ENCODE measurements at regions of chr11 and their contacts with region 1.

Region 1: GRCh38 chr11:111694851-111695250 is 71.3 kb downstream of the PPP2R1B start:
- DNase-seq: no peak
- ATAC-seq: peak; percentile 72
- H3K4me3 ChIP-seq: no peak overlapping the region
- H3K27ac ChIP-seq: no peak overlapping the region
- H3K4me1 ChIP-seq: peaks cover 14% of the 10 kb centered on the region
- H3K27me3 ChIP-seq: no peaks in the 10 kb centered on the region
- CTCF ChIP-seq: no peak
- EP300 ChIP-seq: peak; percentile 51 to 71; a peak in 2 of 4 replicates
- POLR2A ChIP-seq: no peak
- RAD21 ChIP-seq: no peak

Region 2: DNA sequence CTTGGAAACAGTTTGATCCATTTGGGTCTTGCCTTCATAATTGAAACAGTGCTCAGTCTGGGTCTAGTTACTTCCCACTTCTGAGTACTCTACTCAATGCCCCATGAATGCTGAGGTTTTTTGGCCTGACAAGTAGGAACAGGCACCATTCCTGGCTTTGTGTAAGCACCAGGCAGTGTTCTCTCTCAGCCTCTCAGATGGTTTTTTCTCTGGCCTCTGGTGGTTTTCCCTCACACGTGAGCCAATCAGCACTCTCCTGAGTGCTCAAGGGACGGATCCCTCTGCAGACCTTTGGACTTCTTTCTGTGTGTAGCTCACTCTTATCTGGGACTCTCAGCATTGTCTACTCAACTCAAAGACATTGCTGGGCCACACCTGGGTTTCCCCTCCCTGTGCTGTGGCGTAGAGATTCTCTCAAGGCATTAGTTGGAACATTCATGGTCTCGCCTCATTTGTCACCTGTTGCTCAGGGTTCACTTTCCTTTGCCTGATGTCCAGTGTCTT is 71.3 kb before region 1 on chr11:
- CTCF ChIA-PET with region 1: no interaction called
- POLR2A ChIA-PET with region 1: no interaction called
- RAD21 ChIA-PET with region 1: interaction called, 3 read pairs
- SMC1A ChIA-PET with region 1: interaction called, 19 read pairs
- in situ Hi-C with region 1: no loop called
- intact Hi-C with region 1: no loop called
- DNase-seq: peak; percentile 60
- ATAC-seq: peak; percentile 99
- H3K4me3 ChIP-seq: no peak overlapping the region
- H3K27ac ChIP-seq: peak overlapping the region; percentile 12; the same call in 1 of the 2 replicates
- H3K4me1 ChIP-seq: no peaks in the 10 kb centered on the region
- H3K27me3 ChIP-seq: no peaks in the 10 kb centered on the region
- CTCF ChIP-seq: no peak
- EP300 ChIP-seq: 0 out of 4 replicates have a peak, but pooled peaks of 1 of the 2 experiments have one; percentile 15
- POLR2A ChIP-seq: no peak
- RAD21 ChIP-seq: no peak

Region 3: GRCh38 chr11:111676878-111677585 is 17.8 kb before region 1 on chr11:
- CTCF ChIA-PET with region 1: interaction called, 3 read pairs
- POLR2A ChIA-PET with region 1: interaction called, 3 read pairs
- RAD21 ChIA-PET with region 1: interaction called, 4 read pairs
- SMC1A ChIA-PET with region 1: interaction called, 25 read pairs
- in situ Hi-C with region 1: no loop called
- intact Hi-C with region 1: no loop called
- DNase-seq: no peak
- ATAC-seq: no peak
- H3K4me3 ChIP-seq: no peak overlapping the region
- H3K27ac ChIP-seq: no peak overlapping the region
- H3K4me1 ChIP-seq: no peaks in the 10 kb centered on the region
- H3K27me3 ChIP-seq: no peaks in the 10 kb centered on the region
- CTCF ChIP-seq: no peak
- EP300 ChIP-seq: no peak
- POLR2A ChIP-seq: no peak
- RAD21 ChIP-seq: no peak

Region 4: GRCh38 chr11:111707039-111707690 is 12.3 kb after region 1 on chr11:
- CTCF ChIA-PET with region 1: interaction called, 3 read pairs
- POLR2A ChIA-PET with region 1: interaction called, 4 read pairs
- RAD21 ChIA-PET with region 1: no interaction called
- SMC1A ChIA-PET with region 1: interaction called, 16 read pairs
- in situ Hi-C with region 1: no loop called
- intact Hi-C with region 1: no loop called
- DNase-seq: no peak
- ATAC-seq: no peak
- H3K4me3 ChIP-seq: no peak overlapping the region
- H3K27ac ChIP-seq: no peak overlapping the region
- H3K4me1 ChIP-seq: no peaks in the 10 kb centered on the region
- H3K27me3 ChIP-seq: no peaks in the 10 kb centered on the region
- CTCF ChIP-seq: no peak
- EP300 ChIP-seq: no peak
- POLR2A ChIP-seq: no peak
- RAD21 ChIP-seq: no peak

Region 5: GRCh38 chr11:111766093-111766833 is 71.4 kb after region 1 on chr11 and contains the start of gene PPP2R1B:
- CTCF ChIA-PET with region 1: interaction called, 21 read pairs
- POLR2A ChIA-PET with region 1: interaction called, 4 read pairs
- RAD21 ChIA-PET with region 1: interaction called, 5 read pairs
- SMC1A ChIA-PET with region 1: interaction called, 69 read pairs
- in situ Hi-C with region 1: no loop called
- intact Hi-C with region 1: no loop called
- DNase-seq: peak; percentile 35
- ATAC-seq: peak; percentile 97
- H3K4me3 ChIP-seq: peak within 1 kb of the TSS; percentile 78
- H3K27ac ChIP-seq: peak within 1 kb of the TSS; percentile 77
- H3K4me1 ChIP-seq: no peaks in the 10 kb centered on the region; the same call in 1 of the 2 replicates
- H3K27me3 ChIP-seq: no peaks in the 10 kb centered on the region
- CTCF ChIP-seq: no peak
- EP300 ChIP-seq: no peak
- POLR2A ChIP-seq: peak; percentile 89
- RAD21 ChIP-seq: no peak
- polyA plus RNA-seq, gene PPP2R1B: 28.5 to 37.0 TPM

Measured in GM12878 (cell line).